ENCODE measurements at regions of chr9 and their contacts with region 1.

Region 1: DNA sequence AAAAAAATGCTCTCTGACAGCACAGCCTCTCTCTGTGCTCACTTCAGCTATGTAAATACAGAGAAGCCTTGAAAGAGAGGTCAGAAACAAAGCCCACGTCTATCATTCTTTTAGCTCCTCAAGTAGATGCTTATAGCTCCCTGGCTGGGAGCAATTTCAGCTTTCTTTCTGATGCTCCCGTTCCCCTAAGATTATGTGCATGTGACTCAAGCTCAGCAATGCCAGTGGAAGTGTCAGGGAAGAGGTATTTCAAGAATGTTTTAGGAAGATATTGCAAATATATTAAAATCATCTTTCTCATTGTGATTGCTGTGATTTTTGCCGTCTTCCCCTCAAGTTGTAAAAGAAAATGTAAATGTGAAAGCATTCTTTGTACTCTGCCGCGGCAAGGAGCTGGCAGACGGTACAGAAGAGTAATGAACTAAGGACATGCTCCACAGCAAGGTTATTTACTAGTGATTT is 1353.7 kb upstream of the ACO1 start:
- DNase-seq: no peak
- H3K4me3 ChIP-seq: no peak overlapping the region
- H3K4me3 Mint-ChIP-seq: peak overlapping the region; percentile 32
- H3K27ac Mint-ChIP-seq: no peak overlapping the region
- H3K4me1 ChIP-seq: 0 out of 2 replicates have a peak, but pooled peaks cover 4% of the 10 kb centered on the region
- H3K4me1 Mint-ChIP-seq: no peaks in the 10 kb centered on the region
- H3K27me3 ChIP-seq: no peaks in the 10 kb centered on the region
- H3K27me3 Mint-ChIP-seq: peaks cover 2% of the 10 kb centered on the region
- CTCF ChIP-seq: no peak

Region 2: DNA sequence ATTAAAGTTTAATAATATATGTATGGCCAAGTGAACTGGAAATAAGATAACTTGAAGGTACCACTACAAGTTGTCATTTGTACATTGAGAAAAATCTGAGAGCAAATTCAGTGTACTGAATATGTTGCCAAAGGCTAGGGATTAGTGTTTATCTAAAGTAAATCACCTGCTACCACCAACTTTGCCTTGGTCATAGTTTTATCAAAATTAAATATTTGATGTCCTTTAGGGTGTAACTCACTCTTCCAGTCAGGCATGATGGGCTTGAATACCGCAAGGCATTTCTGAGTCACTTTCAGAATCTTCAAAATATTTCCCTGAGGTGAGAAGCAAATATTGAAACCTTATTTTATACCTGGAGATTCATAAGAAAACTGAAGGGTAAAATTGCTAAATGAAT is 15.0 kb after region 1 on chr9:
- CTCF ChIA-PET with region 1: no interaction called
- POLR2A ChIA-PET with region 1: no interaction called
- intact Hi-C with region 1: loop called (anchors 2 kb)
- DNase-seq: peak in 1 of 2 experiments; percentile 22
- H3K4me3 ChIP-seq: no peak overlapping the region
- H3K4me3 Mint-ChIP-seq: no peak overlapping the region
- H3K27ac Mint-ChIP-seq: no peak overlapping the region
- H3K4me1 ChIP-seq: peaks cover 29% of the 10 kb centered on the region
- H3K4me1 Mint-ChIP-seq: peaks cover 20% of the 10 kb centered on the region
- H3K27me3 ChIP-seq: no peaks in the 10 kb centered on the region
- H3K27me3 Mint-ChIP-seq: no peaks in the 10 kb centered on the region
- CTCF ChIP-seq: no peak

Region 3: DNA sequence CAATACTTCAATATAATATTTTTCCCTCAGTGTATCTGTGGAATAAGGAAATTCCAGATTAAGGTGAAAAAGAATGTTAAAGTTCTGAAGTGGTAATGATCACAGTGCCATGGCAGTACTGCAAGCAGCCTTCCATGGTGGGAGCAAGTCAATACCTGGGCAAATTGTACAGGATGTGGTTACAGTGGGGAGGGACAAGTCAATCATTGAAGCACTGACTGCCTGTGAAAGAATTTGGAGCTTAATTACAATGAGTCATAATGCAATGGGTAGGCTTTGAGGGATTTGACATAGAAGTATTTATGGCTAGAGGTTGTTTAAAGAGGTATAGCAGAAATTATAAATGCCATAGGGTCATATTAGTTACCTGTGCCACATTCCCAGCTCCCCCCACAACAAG is 567.2 kb after region 1 on chr9:
- CTCF ChIA-PET with region 1: no interaction called
- POLR2A ChIA-PET with region 1: no interaction called
- intact Hi-C with region 1: no loop called
- DNase-seq: no peak
- H3K4me3 ChIP-seq: no peak overlapping the region
- H3K4me3 Mint-ChIP-seq: no peak overlapping the region
- H3K27ac Mint-ChIP-seq: no peak overlapping the region
- H3K4me1 ChIP-seq: no peaks in the 10 kb centered on the region
- H3K4me1 Mint-ChIP-seq: no peaks in the 10 kb centered on the region
- H3K27me3 ChIP-seq: no peaks in the 10 kb centered on the region
- H3K27me3 Mint-ChIP-seq: no peaks in the 10 kb centered on the region
- CTCF ChIP-seq: no peak